ENCODE measurements at regions of chr4 and their contacts with region 1.

Region 1: DNA sequence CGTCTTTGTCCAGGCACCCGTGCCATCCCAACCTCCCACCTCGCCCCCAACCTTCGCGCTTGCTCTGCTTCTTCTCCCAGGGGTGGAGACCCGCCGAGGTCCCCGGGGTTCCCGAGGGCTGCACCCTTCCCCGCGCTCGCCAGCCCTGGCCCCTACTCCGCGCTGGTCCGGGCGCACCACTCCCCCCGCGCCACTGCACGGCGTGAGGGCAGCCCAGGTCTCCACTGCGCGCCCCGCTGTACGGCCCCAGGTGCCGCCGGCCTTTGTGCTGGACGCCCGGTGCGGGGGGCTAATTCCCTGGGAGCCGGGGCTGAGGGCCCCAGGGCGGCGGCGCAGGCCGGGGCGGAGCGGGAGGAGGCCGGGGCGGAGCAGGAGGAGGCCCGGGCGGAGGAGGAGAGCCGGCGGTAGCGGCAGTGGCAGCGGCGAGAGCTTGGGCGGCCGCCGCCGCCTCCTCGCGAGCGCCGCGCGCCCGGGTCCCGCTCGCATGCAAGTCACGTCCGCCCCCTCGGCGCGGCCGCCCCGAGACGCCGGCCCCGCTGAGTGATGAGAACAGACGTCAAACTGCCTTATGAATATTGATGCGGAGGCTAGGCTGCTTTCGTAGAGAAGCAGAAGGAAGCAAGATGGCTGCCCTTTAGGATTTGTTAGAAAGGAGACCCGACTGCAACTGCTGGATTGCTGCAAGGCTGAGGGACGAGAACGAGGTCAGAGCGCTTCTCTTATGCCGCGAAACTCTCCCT is at the start of gene TET2:
- DNase-seq: peak; percentile 88
- H3K4me3 Mint-ChIP-seq: peak within 1 kb of the TSS; percentile 99
- H3K27ac Mint-ChIP-seq: peak within 1 kb of the TSS; percentile 99
- H3K4me1 Mint-ChIP-seq: peaks cover 35% of the 10 kb centered on the region
- H3K27me3 Mint-ChIP-seq: no peaks in the 10 kb centered on the region
- total RNA-seq, gene TET2: 30.2 to 30.6 TPM

Region 2: DNA sequence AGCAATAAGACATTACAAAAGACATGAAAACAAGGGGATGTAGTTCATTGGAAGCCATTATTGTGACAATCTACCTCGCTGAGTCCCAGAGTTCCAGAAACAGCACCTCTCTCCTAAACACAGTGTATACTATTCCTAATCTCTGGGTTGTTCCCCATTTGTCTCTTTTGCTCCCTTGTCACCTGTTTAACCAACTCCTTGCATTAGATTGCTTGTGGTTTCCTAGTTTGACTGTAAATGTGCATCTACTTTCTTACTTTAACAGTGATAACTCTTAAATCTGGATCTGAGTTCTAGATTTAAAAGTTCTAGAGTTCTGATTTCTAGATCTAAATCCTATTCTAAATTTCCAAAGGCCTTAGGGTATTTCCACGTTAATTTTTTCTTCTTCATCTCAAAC is 71.4 kb before region 1 on chr4:
- CTCF ChIA-PET with region 1: no interaction called
- POLR2A ChIA-PET with region 1: no interaction called
- intact Hi-C with region 1: no loop called
- DNase-seq: no peak
- H3K4me3 Mint-ChIP-seq: no peak overlapping the region
- H3K27ac Mint-ChIP-seq: no peak overlapping the region
- H3K4me1 Mint-ChIP-seq: no peaks in the 10 kb centered on the region
- H3K27me3 Mint-ChIP-seq: peaks cover 8% of the 10 kb centered on the region

Region 3: GRCh38 chr4:105191621-105192210 is 45.3 kb after region 1 on chr4:
- CTCF ChIA-PET with region 1: interaction called, 3 read pairs
- POLR2A ChIA-PET with region 1: interaction called, 4 read pairs
- intact Hi-C with region 1: loop called (anchors 1 kb)
- DNase-seq: no peak
- H3K4me3 Mint-ChIP-seq: no peak overlapping the region
- H3K27ac Mint-ChIP-seq: peak overlapping the region; percentile 83
- H3K4me1 Mint-ChIP-seq: peaks cover 87% of the 10 kb centered on the region
- H3K27me3 Mint-ChIP-seq: no peaks in the 10 kb centered on the region

Region 4: GRCh38 chr4:105215609-105216313 is 69.3 kb after region 1 on chr4:
- CTCF ChIA-PET with region 1: no interaction called
- POLR2A ChIA-PET with region 1: no interaction called
- intact Hi-C with region 1: loop called (anchors 1 kb)
- DNase-seq: no peak
- H3K4me3 Mint-ChIP-seq: peak overlapping the region; percentile 14
- H3K27ac Mint-ChIP-seq: peak overlapping the region; percentile 65
- H3K4me1 Mint-ChIP-seq: peaks cover 42% of the 10 kb centered on the region
- H3K27me3 Mint-ChIP-seq: no peaks in the 10 kb centered on the region

Region 5: GRCh38 chr4:105274504-105274903 is 128.1 kb after region 1 on chr4:
- CTCF ChIA-PET with region 1: no interaction called
- POLR2A ChIA-PET with region 1: no interaction called
- intact Hi-C with region 1: loop called (anchors 1 kb)
- DNase-seq: no peak
- H3K4me3 Mint-ChIP-seq: no peak overlapping the region
- H3K27ac Mint-ChIP-seq: peak overlapping the region; percentile 57
- H3K4me1 Mint-ChIP-seq: peaks cover 46% of the 10 kb centered on the region
- H3K27me3 Mint-ChIP-seq: no peaks in the 10 kb centered on the region

Region 6: DNA sequence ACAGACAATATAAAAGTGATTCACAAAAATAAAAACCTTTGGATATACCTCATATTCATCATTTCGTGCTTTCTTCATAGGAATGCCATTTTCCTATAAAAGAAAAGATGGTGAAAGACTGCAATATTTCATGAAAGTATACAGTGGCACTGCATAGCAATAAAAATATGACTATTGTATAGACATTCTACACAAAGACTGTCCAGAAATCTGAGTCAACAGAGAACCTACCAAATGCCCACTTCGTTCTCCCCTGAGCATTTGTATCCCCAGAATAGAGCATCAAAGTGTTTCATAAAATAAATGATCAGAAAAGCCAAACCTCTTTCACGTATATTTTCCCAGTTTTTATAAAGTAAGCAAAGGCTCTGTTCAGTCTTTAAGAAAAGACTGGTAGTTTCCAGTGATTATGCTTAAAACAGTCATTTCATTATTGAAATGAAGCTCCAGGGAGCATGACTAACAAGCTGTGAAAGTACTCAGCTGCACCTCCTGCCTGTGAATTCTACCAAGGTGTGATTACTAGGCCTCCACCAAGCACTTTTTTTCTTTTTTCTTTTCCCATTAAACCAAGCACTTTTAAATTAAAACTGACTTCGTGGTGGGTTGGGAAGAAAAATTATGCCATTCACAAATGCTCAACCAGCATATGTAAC is 307.2 kb after region 1 on chr4:
- CTCF ChIA-PET with region 1: no interaction called
- POLR2A ChIA-PET with region 1: no interaction called
- intact Hi-C with region 1: loop called (anchors 1 kb)
- DNase-seq: peak; percentile 51
- H3K4me3 Mint-ChIP-seq: no peak overlapping the region
- H3K27ac Mint-ChIP-seq: peak overlapping the region; percentile 69
- H3K4me1 Mint-ChIP-seq: peaks cover 38% of the 10 kb centered on the region
- H3K27me3 Mint-ChIP-seq: no peaks in the 10 kb centered on the region

Region 7: DNA sequence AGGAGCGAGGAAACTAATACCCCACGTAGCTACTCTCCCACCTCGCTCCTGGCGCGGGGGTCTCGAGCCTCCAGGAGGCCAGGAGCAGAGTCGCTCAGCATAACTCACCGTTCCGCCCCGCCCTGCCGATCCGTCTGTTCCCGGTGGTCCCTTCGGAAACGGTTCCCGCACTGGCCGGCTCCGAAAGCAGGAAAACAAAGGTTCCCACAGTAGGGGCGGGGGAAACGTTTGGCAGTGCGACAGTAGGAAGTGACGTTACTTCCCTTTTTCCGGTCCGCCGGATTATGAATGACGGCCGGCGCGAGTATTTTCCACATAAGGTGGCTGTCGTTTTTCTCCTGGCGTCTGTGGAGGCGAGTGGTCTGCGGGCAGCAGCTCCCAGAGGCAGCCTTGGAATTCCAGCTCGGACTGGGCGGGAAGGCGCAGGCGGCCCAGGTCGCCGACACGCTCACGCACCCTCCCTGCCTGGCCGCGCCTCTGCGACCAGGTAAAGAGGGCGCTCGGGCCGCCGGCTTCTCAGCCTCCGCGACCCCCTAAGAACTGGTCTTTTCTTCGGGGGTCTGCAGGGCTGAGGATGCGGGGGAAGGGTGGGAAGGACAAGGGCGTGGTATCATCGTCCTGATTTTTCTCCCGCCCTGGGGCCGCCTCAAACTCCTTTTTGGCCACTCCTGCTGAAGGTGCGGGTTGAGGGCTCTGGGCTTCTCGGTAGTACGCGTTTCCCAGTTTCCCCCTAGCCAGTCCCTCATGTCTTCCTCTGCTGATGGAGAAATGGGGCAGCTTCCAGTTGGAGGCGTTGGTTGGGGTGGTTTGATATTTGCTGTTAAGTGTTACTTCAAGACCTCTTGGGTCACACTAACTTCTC is 562.3 kb after region 1 on chr4 and contains the starts of genes GSTCD and INTS12:
- CTCF ChIA-PET with region 1: interaction called, 3 read pairs
- POLR2A ChIA-PET with region 1: no interaction called
- intact Hi-C with region 1: loop called (anchors 2 kb)
- DNase-seq: peak; percentile 93
- H3K4me3 Mint-ChIP-seq: peak within 1 kb of the TSS; percentile 98
- H3K27ac Mint-ChIP-seq: peak within 1 kb of the TSS; percentile 86
- H3K4me1 Mint-ChIP-seq: peaks cover 27% of the 10 kb centered on the region
- H3K27me3 Mint-ChIP-seq: no peaks in the 10 kb centered on the region
- total RNA-seq, gene GSTCD: 15.2 to 16.7 TPM
- total RNA-seq, gene INTS12: 19.6 to 22.7 TPM

Region 8: DNA sequence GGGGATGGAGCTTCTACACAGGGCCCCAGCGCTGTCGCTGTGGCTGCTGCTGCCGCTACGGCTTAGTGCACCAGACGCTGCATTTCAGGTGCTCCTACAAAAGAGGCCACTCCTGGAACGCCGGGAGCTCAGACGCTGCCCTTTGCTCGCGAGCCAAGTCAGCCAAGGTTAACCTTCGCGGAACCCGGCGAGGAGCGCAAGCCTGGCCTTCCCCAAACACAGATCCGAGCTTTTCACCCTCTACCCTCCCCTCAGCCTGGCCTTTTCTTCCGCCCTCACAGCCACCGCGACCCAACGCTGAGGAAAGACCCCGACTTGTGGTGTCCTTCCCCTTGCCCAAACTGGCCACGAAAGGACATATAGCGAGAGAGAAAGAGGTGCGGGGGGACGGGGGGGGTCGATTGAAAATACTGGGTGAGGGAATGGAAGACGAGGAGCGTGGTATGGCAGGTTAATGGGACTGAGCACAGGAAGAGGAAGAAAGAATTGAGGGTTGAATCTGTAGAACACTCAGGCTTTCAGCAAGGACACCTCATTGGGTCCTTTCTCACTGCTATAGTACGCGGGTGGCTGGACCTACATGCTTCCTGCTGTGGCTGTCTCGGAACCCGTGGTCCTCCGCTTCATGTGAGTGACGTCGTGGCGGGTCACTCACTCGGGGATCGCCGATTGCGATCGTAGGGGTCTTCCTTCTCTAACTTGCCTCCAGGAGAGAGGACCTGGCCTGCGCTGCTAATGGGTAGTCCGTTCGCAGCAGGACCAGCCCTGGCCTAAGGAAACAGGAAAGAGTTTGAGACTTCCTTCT is 1169.7 kb after region 1 on chr4 and contains the starts of genes AIMP1 and TBCK:
- CTCF ChIA-PET with region 1: no interaction called
- POLR2A ChIA-PET with region 1: no interaction called
- intact Hi-C with region 1: loop called (anchors 5 kb)
- DNase-seq: peak; percentile 92
- H3K4me3 Mint-ChIP-seq: no peak within 1 kb of the TSS
- H3K27ac Mint-ChIP-seq: no peak within 1 kb of the TSS
- H3K4me1 Mint-ChIP-seq: peaks cover 44% of the 10 kb centered on the region
- H3K27me3 Mint-ChIP-seq: no peaks in the 10 kb centered on the region
- total RNA-seq, gene AIMP1: 59.2 to 60.1 TPM
- total RNA-seq, gene TBCK: 20.2 to 22.0 TPM